ENCODE measurements at regions of chr12 and their contacts with region 1.

Region 1: DNA sequence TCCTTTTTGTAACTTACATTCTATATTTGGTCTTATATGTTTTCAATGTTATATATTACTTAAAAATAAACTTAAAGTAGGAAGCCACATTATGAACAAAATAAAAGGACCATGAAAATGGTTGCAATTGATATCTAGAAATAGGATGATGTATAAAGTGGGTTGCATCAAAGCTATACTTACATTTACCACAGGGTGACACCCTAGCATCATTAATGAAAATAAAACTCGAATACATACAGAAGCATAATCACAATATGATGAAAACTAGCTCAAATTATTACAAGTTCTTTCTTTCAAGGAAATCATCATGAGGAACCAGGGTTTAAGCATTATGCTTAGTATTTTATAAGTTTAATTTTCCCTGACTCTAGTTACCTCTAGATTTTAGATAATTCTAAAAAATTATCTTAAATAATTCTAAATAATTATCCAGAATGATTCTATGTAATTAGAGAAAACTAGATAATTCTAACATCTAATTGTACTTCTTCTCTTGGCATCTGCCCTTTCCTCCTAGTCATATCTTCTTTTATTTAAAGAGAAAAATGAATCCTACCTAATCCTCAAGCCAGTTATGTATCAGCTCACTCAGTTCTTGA is 31.2 kb downstream of the TAS2R7 start:
- DNase-seq: peak in 2 of 35 experiments; percentile 16 to 73
- ATAC-seq: peak in 1 of 4 experiments; percentile 62
- H3K4me3 ChIP-seq: no peak overlapping the region
- H3K4me3 Mint-ChIP-seq: no peak overlapping the region
- H3K27ac ChIP-seq: no peak overlapping the region
- H3K27ac Mint-ChIP-seq: no peak overlapping the region
- H3K4me1 ChIP-seq: no peaks in the 10 kb centered on the region
- H3K4me1 Mint-ChIP-seq: no peaks in the 10 kb centered on the region
- H3K27me3 ChIP-seq: peaks cover 0 to 5% of the 10 kb centered on the region in 2 experiments
- H3K27me3 Mint-ChIP-seq: peaks cover 40 to 43% of the 10 kb centered on the region in 2 donors

Region 2: GRCh38 chr12:10385166-10385613 is 386.0 kb before region 1 on chr12:
- CTCF ChIA-PET with region 1: no interaction called
- POLR2A ChIA-PET with region 1: interaction called in 1 of 2 experiments, 10 read pairs
- DNase-seq: no peak
- ATAC-seq: peak in 2 of 4 experiments; percentile 23 to 33
- H3K4me3 ChIP-seq: peak overlapping the region in 1 of 2 donors; percentile 33
- H3K4me3 Mint-ChIP-seq: peak overlapping the region; percentile 54 to 78 (median 69)
- H3K27ac ChIP-seq: peak overlapping the region; percentile 66
- H3K27ac Mint-ChIP-seq: peak overlapping the region; percentile 30 to 55
- H3K4me1 ChIP-seq: peaks cover 6 to 13% of the 10 kb centered on the region in 2 experiments
- H3K4me1 Mint-ChIP-seq: peaks cover 14 to 26% (median 17%) of the 10 kb centered on the region in 3 donors
- H3K27me3 ChIP-seq: no peaks in the 10 kb centered on the region
- H3K27me3 Mint-ChIP-seq: peaks cover 8 to 17% of the 10 kb centered on the region in 2 donors

Region 3: DNA sequence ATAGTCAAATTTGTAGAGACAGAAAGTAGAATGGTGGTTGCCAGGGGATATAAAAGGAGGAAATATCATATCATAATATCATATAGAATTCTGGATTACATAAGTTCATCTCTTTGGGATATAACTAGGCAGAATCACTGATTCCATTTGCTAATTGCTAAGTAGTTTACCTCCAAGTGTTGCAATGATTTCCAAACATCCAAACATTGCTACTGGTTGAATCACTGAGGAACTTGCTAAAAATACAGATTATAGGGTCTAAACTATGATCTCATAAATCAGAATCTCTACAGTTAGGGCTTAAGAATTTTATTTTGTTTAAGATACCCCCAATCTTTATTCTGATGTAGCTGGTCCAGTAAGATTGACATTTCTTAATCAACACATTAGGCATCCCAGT is 431.6 kb after region 1 on chr12:
- CTCF ChIA-PET with region 1: interaction called, 16 to 37 read pairs
- POLR2A ChIA-PET with region 1: no interaction called
- DNase-seq: no peak
- ATAC-seq: no peak
- H3K4me3 ChIP-seq: no peak overlapping the region
- H3K4me3 Mint-ChIP-seq: no peak overlapping the region
- H3K27ac ChIP-seq: no peak overlapping the region
- H3K27ac Mint-ChIP-seq: no peak overlapping the region
- H3K4me1 ChIP-seq: no peaks in the 10 kb centered on the region
- H3K4me1 Mint-ChIP-seq: no peaks in the 10 kb centered on the region
- H3K27me3 ChIP-seq: no peaks in the 10 kb centered on the region
- H3K27me3 Mint-ChIP-seq: no peaks in the 10 kb centered on the region

Region 4: GRCh38 chr12:11486623-11487444 is 715.6 kb after region 1 on chr12:
- CTCF ChIA-PET with region 1: interaction called, 8 to 73 read pairs
- POLR2A ChIA-PET with region 1: no interaction called
- DNase-seq: peak; percentile 55 to 92 (median 74)
- ATAC-seq: peak; percentile 83 to 95 (median 87)
- H3K4me3 ChIP-seq: no peak overlapping the region
- H3K4me3 Mint-ChIP-seq: no peak overlapping the region
- H3K27ac ChIP-seq: no peak overlapping the region
- H3K27ac Mint-ChIP-seq: no peak overlapping the region
- H3K4me1 ChIP-seq: no peaks in the 10 kb centered on the region
- H3K4me1 Mint-ChIP-seq: peaks cover 0 to 6% (median 5%) of the 10 kb centered on the region in 3 donors
- H3K27me3 ChIP-seq: peaks cover 0 to 4% of the 10 kb centered on the region in 2 experiments
- H3K27me3 Mint-ChIP-seq: peaks cover 4 to 5% of the 10 kb centered on the region in 2 donors

Measured in T-cell (primary cell).